ENCODE measurements at regions of chr6 and their contacts with region 1.

Region 1: GRCh38 chr6:13668291-13668928 is 43.2 kb downstream of the RANBP9 start:
- DNase-seq: peak in 2 of 9 experiments; percentile 20 to 44
- ATAC-seq: no peak
- H3K4me3 ChIP-seq: no peak overlapping the region
- H3K4me3 Mint-ChIP-seq: no peak overlapping the region
- H3K27ac ChIP-seq: no peak overlapping the region
- H3K27ac Mint-ChIP-seq: peak overlapping the region; percentile 68
- H3K4me1 ChIP-seq: peaks cover 47% of the 10 kb centered on the region
- H3K4me1 Mint-ChIP-seq: peaks cover 90% of the 10 kb centered on the region
- H3K27me3 ChIP-seq: no peaks in the 10 kb centered on the region
- H3K27me3 Mint-ChIP-seq: no peaks in the 10 kb centered on the region
- CTCF ChIP-seq: no peak

Region 2: DNA sequence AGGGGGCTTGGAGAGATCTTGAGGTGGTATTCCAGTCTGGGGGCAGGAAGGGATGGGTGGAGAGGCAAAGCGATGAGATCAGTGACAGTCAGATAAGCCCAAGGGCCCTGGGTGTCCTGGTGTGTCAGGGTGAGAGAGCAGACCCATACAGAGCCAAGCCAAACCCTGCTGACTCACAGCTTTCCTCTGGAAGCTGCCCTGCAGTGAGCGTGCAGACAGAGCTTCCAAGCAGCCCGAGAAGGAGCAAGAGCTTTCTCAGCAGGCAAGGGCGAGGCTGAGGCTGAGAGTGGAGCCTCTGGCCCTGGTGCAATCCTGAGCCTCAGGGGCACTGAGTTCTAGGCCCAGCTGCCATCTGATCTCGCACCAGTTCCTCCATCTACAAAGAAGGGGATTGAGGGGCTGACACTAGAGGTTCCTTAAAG is 1747.4 kb before region 1 on chr6:
- CTCF ChIA-PET with region 1: no interaction called
- POLR2A ChIA-PET with region 1: no interaction called
- intact Hi-C with region 1: no loop called
- DNase-seq: no peak
- ATAC-seq: no peak
- H3K4me3 ChIP-seq: no peak overlapping the region
- H3K4me3 Mint-ChIP-seq: no peak overlapping the region
- H3K27ac ChIP-seq: no peak overlapping the region
- H3K27ac Mint-ChIP-seq: no peak overlapping the region
- H3K4me1 ChIP-seq: no peaks in the 10 kb centered on the region
- H3K4me1 Mint-ChIP-seq: no peaks in the 10 kb centered on the region
- H3K27me3 ChIP-seq: peaks cover 0 to 2% of the 10 kb centered on the region in 2 experiments
- H3K27me3 Mint-ChIP-seq: peaks cover 2% of the 10 kb centered on the region
- CTCF ChIP-seq: no peak

Region 3: DNA sequence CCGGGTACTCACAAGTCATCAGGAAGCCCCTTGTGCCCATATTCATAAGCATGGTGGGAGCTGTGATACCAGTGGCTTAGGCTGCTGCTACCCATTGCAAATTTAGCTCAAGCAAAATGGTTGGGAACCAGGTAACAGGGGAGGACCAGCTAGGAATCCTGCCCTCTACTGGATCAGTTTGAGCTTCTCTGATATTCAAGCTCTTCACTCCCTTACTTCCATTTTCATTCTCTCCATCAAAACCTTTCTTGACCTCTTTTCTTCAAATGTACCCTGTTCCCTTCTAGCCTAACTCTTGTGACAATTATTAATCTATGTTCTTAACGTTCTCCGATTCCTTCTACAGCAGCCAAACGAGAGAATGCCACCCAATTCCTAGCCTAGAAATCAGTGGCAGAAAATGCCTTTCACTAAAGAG is 43.5 kb before region 1 on chr6:
- CTCF ChIA-PET with region 1: no interaction called
- POLR2A ChIA-PET with region 1: no interaction called
- intact Hi-C with region 1: loop called in 1 of 2 experiments (anchors 5 kb)
- DNase-seq: peak in 3 of 9 experiments; percentile 26 to 70 (median 58)
- ATAC-seq: peak; percentile 90
- H3K4me3 ChIP-seq: no peak overlapping the region
- H3K4me3 Mint-ChIP-seq: no peak overlapping the region
- H3K27ac ChIP-seq: no peak overlapping the region
- H3K27ac Mint-ChIP-seq: peak overlapping the region; percentile 72
- H3K4me1 ChIP-seq: no peaks in the 10 kb centered on the region
- H3K4me1 Mint-ChIP-seq: peaks cover 16% of the 10 kb centered on the region
- H3K27me3 ChIP-seq: no peaks in the 10 kb centered on the region
- H3K27me3 Mint-ChIP-seq: no peaks in the 10 kb centered on the region
- CTCF ChIP-seq: no peak

Region 4: GRCh38 chr6:13681305-13682061 is 13.1 kb after region 1 on chr6:
- CTCF ChIA-PET with region 1: no interaction called
- POLR2A ChIA-PET with region 1: interaction called, 6 read pairs
- intact Hi-C with region 1: loop called in 1 of 2 experiments (anchors 2 kb)
- DNase-seq: peak in 3 of 9 experiments; percentile 25 to 73 (median 49)
- ATAC-seq: peak; percentile 79
- H3K4me3 ChIP-seq: peak overlapping the region in 1 of 2 experiments; percentile 7
- H3K4me3 Mint-ChIP-seq: peak overlapping the region; percentile 55
- H3K27ac ChIP-seq: peak overlapping the region; percentile 26 to 65
- H3K27ac Mint-ChIP-seq: peak overlapping the region; percentile 88
- H3K4me1 ChIP-seq: peaks cover 39% of the 10 kb centered on the region
- H3K4me1 Mint-ChIP-seq: peaks cover 66% of the 10 kb centered on the region
- H3K27me3 ChIP-seq: no peaks in the 10 kb centered on the region
- H3K27me3 Mint-ChIP-seq: no peaks in the 10 kb centered on the region
- CTCF ChIP-seq: no peak

Region 5: GRCh38 chr6:13696226-13696625 is 27.8 kb after region 1 on chr6:
- CTCF ChIA-PET with region 1: no interaction called
- POLR2A ChIA-PET with region 1: interaction called, 4 read pairs
- intact Hi-C with region 1: loop called in 1 of 2 experiments (anchors 5 kb)
- DNase-seq: no peak
- ATAC-seq: no peak
- H3K4me3 ChIP-seq: no peak overlapping the region
- H3K4me3 Mint-ChIP-seq: no peak overlapping the region
- H3K27ac ChIP-seq: peak overlapping the region in 1 of 2 experiments; percentile 62
- H3K27ac Mint-ChIP-seq: peak overlapping the region; percentile 74
- H3K4me1 ChIP-seq: peaks cover 54% of the 10 kb centered on the region
- H3K4me1 Mint-ChIP-seq: peaks cover 80% of the 10 kb centered on the region
- H3K27me3 ChIP-seq: no peaks in the 10 kb centered on the region
- H3K27me3 Mint-ChIP-seq: no peaks in the 10 kb centered on the region
- CTCF ChIP-seq: no peak